K562 (cell line): ENCODE measurements at regions of chr1 and their contacts with region 1.

Region 1: DNA sequence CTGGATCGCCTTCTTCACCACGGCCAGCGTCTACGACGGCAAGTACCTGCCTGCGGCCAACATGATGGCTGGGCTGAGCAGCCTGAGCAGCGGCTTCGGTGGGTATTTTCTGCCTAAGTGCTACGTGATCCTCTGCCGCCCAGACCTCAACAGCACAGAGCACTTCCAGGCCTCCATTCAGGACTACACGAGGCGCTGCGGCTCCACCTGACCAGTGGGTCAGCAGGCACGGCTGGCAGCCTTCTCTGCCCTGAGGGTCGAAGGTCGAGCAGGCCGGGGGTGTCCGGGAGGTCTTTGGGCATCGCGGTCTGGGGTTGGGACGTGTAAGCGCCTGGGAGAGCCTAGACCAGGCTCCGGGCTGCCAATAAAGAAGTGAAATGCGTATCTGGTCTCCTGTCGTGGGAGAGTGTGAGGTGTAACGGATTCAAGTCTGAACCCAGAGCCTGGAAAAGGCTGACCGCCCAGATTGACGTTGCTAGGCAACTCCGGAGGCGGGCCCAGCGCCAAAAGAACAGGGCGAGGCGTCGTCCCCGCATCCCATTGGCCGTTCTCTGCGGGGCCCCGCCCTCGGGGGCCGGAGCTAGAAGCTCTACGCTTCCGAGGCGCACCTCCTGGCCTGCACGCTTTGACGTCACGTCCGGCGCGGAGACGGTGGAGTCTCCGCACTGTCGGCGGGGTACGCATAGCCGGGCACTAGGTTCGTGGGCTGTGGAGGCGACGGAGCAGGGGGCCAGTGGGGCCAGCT is at the start of gene ZBTB48:
- DNase-seq: peak; percentile 100
- ATAC-seq: peak; percentile 96
- H3K4me3 ChIP-seq: peak within 1 kb of the TSS; percentile 74
- H3K27ac ChIP-seq: peak within 1 kb of the TSS; percentile 73
- H3K4me1 ChIP-seq: peaks cover 35 to 57% of the 10 kb centered on the region in 2 experiments
- H3K27me3 ChIP-seq: no peaks in the 10 kb centered on the region
- CTCF ChIP-seq: no peak
- EP300 ChIP-seq: no peak
- POLR2A ChIP-seq: peak; percentile 94
- RAD21 ChIP-seq: no peak
- polyA plus RNA-seq, gene ZBTB48: 1.9 to 7.4 TPM

Region 2: GRCh38 chr1:6454856-6455751 is 124.4 kb before region 1 on chr1:
- CTCF ChIA-PET with region 1: no interaction called
- POLR2A ChIA-PET with region 1: no interaction called
- in situ Hi-C with region 1: no loop called
- intact Hi-C with region 1: no loop called
- DNase-seq: no peak
- ATAC-seq: no peak
- H3K4me3 ChIP-seq: no peak overlapping the region
- H3K27ac ChIP-seq: no peak overlapping the region
- H3K4me1 ChIP-seq: peaks cover 0 to 42% of the 10 kb centered on the region in 2 experiments; a peak in 2 of 5 replicates
- H3K27me3 ChIP-seq: peaks cover 36 to 79% of the 10 kb centered on the region in 2 experiments
- CTCF ChIP-seq: no peak
- EP300 ChIP-seq: no peak
- POLR2A ChIP-seq: no peak
- RAD21 ChIP-seq: no peak

Region 3: DNA sequence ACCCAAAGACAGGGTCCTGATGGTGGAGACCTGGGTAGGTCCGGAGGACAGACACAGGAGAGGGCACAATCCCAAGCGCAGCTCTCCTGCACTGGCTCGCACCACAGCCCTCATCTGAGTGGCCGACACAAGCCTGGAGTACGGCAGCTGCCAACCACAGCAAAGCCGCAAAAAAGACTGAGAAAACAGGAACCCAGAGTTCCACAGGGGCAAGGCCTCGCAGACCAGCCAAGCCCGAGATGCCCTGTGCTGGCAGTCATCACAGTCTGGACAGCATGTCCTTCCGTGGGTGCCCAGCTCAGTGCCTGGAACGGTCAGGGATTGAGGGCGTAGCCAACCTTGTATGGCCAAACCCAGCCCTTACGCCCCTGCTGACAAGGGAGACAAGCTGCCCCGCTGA is 11.7 kb after region 1 on chr1:
- CTCF ChIA-PET with region 1: no interaction called
- POLR2A ChIA-PET with region 1: interaction called, 221 read pairs
- in situ Hi-C with region 1: no loop called
- intact Hi-C with region 1: no loop called
- DNase-seq: no peak
- ATAC-seq: no peak
- H3K4me3 ChIP-seq: no peak overlapping the region
- H3K27ac ChIP-seq: no peak overlapping the region
- H3K4me1 ChIP-seq: peaks cover 0 to 39% of the 10 kb centered on the region in 2 experiments; a peak in 1 of 5 replicates
- H3K27me3 ChIP-seq: no peaks in the 10 kb centered on the region
- CTCF ChIP-seq: no peak
- EP300 ChIP-seq: no peak
- POLR2A ChIP-seq: no peak
- RAD21 ChIP-seq: no peak